Caco-2 (cell line): ENCODE measurements at regions of chr21 and their contacts with region 1.

Region 1: GRCh38 chr21:16194095-16194787 is 464.5 kb downstream of the USP25 start:
- DNase-seq: peak; percentile 57
- H3K4me3 ChIP-seq: no peak overlapping the region
- H3K4me3 Mint-ChIP-seq: peak overlapping the region; percentile 64
- H3K27ac Mint-ChIP-seq: no peak overlapping the region
- H3K4me1 ChIP-seq: peaks cover 4% of the 10 kb centered on the region; the same call in 1 of the 2 replicates
- H3K4me1 Mint-ChIP-seq: no peaks in the 10 kb centered on the region
- H3K27me3 ChIP-seq: no peaks in the 10 kb centered on the region
- H3K27me3 Mint-ChIP-seq: no peaks in the 10 kb centered on the region
- CTCF ChIP-seq: peak in 1 of 2 experiments; percentile 33

Region 2: DNA sequence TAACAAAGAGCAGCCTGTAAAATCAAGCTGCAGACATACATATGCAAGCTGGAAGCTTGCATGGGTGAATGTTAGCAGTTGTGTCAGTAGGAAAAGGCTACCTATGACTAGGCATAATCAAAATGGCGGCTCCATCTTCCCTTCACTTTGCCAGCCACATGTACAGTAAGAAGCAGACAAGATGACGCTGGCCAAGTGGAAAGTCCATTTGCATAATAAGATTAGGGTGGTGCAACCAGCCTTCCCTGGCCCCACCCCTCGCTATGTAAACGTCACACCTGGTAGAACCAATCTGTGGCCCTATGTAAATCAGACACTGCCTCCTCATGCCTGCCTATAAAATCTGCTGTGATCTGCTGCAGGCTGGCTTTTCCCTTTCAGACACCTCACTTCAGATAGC is 636.3 kb before region 1 on chr21:
- CTCF ChIA-PET with region 1: no interaction called
- POLR2A ChIA-PET with region 1: no interaction called
- intact Hi-C with region 1: no loop called
- DNase-seq: peak; percentile 13 to 46
- H3K4me3 ChIP-seq: no peak overlapping the region
- H3K4me3 Mint-ChIP-seq: no peak overlapping the region
- H3K27ac Mint-ChIP-seq: no peak overlapping the region
- H3K4me1 ChIP-seq: 0 out of 2 replicates have a peak, but pooled peaks cover 4% of the 10 kb centered on the region
- H3K4me1 Mint-ChIP-seq: peaks cover 7% of the 10 kb centered on the region
- H3K27me3 ChIP-seq: no peaks in the 10 kb centered on the region
- H3K27me3 Mint-ChIP-seq: no peaks in the 10 kb centered on the region
- CTCF ChIP-seq: no peak

Region 3: DNA sequence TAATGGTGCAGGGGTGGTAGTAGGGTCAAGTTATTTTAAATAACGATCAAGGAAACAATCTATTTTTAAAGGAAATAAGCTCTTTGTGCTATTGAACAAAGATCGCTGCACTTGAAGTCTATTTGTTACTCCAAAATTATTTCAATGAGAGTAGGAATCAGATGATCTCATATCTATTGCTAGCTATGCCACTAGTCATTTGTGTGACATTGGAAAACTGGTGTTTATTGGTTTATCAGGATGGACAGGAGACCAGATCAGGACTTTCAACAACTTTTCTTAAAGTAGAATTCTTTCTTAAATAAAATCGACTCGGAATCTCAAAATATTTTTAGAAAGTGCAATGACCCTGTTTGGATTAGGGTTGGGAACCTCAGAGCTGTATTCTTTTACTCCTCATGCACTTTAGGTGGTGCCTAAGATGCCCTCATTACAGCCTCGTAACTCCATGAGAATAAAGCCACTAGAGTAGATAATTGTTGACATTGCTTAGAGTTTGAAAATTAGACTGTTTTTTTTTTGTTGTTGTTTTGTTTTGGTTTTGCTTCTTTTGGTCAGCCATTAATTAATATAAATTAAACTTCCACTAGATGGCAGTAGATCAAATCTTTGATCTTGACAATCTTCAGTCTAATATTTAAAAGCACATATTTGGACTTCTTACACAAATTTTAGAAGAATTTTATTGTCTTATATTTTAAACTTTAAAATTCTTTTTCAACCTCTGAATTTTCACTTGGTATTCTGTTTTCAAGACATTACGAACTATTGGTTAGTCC is 112.0 kb before region 1 on chr21:
- CTCF ChIA-PET with region 1: no interaction called
- POLR2A ChIA-PET with region 1: no interaction called
- intact Hi-C with region 1: loop called (anchors 10 kb)
- DNase-seq: no peak
- H3K4me3 ChIP-seq: no peak overlapping the region
- H3K4me3 Mint-ChIP-seq: no peak overlapping the region
- H3K27ac Mint-ChIP-seq: no peak overlapping the region
- H3K4me1 ChIP-seq: no peaks in the 10 kb centered on the region
- H3K4me1 Mint-ChIP-seq: no peaks in the 10 kb centered on the region
- H3K27me3 ChIP-seq: no peaks in the 10 kb centered on the region
- H3K27me3 Mint-ChIP-seq: no peaks in the 10 kb centered on the region
- CTCF ChIP-seq: peak in 1 of 2 experiments; percentile 47

Region 4: GRCh38 chr21:16179773-16180172 is 14.5 kb before region 1 on chr21:
- CTCF ChIA-PET with region 1: no interaction called
- POLR2A ChIA-PET with region 1: no interaction called
- intact Hi-C with region 1: loop called (anchors 1 kb)
- DNase-seq: no peak
- H3K4me3 ChIP-seq: no peak overlapping the region
- H3K4me3 Mint-ChIP-seq: no peak overlapping the region
- H3K27ac Mint-ChIP-seq: peak overlapping the region; percentile 67
- H3K4me1 ChIP-seq: peaks cover 22% of the 10 kb centered on the region
- H3K4me1 Mint-ChIP-seq: peaks cover 15% of the 10 kb centered on the region
- H3K27me3 ChIP-seq: no peaks in the 10 kb centered on the region
- H3K27me3 Mint-ChIP-seq: no peaks in the 10 kb centered on the region
- CTCF ChIP-seq: no peak

Region 5: GRCh38 chr21:16239659-16240265 is 45.5 kb after region 1 on chr21:
- CTCF ChIA-PET with region 1: no interaction called
- POLR2A ChIA-PET with region 1: interaction called, 10 read pairs
- intact Hi-C with region 1: no loop called
- DNase-seq: no peak
- H3K4me3 ChIP-seq: no peak overlapping the region
- H3K4me3 Mint-ChIP-seq: no peak overlapping the region
- H3K27ac Mint-ChIP-seq: no peak overlapping the region
- H3K4me1 ChIP-seq: no peaks in the 10 kb centered on the region
- H3K4me1 Mint-ChIP-seq: no peaks in the 10 kb centered on the region
- H3K27me3 ChIP-seq: no peaks in the 10 kb centered on the region
- H3K27me3 Mint-ChIP-seq: peaks cover 2% of the 10 kb centered on the region
- CTCF ChIP-seq: no peak

Region 6: DNA sequence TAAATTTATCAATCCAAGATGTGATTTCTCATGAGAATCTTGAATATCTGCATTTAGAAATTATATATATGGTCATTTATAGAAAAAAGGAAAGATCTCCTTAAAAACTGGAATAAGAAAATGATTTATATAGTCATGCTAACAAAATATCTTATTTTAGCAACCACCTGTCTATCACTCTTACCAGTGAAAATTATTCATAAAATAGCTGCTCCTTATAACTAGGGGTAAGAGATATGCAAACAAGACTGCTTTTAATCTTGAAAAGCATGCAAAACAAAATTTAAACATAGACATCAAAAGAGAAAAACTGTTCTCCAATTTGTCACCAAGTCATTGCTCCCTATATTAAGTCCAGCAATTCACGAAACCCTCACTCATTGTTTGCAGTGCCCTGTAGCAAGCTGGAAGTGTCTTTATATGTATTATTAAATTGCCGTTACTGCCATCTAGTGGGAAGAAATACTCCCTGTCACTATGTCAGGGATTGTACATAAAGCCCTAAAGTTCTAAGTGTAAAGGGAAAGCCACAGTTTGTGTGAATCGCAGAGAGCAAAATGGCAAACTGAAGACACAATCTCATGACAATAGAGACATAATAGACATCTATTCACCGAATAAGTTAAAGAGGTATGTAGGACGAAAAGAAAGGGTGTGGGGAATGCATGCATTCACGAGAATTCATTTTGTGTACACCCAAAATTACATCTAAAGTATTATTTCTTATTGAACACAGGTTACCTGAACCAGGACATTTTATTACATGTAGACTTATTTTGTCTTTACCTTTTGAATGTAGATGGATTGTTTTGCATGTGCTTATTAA is 136.1 kb after region 1 on chr21:
- CTCF ChIA-PET with region 1: interaction called, 5 read pairs
- POLR2A ChIA-PET with region 1: no interaction called
- intact Hi-C with region 1: loop called (anchors 1 kb)
- DNase-seq: peak in 1 of 2 experiments; percentile 60
- H3K4me3 ChIP-seq: no peak overlapping the region
- H3K4me3 Mint-ChIP-seq: no peak overlapping the region
- H3K27ac Mint-ChIP-seq: no peak overlapping the region
- H3K4me1 ChIP-seq: no peaks in the 10 kb centered on the region
- H3K4me1 Mint-ChIP-seq: no peaks in the 10 kb centered on the region
- H3K27me3 ChIP-seq: no peaks in the 10 kb centered on the region
- H3K27me3 Mint-ChIP-seq: no peaks in the 10 kb centered on the region
- CTCF ChIP-seq: peak; percentile 28 to 53